A673 (cell line): ENCODE measurements at regions of chr2 and their contacts with region 1.

Region 1: GRCh38 chr2:170707821-170708795 is 7.0 kb upstream of the SP5 start:
- DNase-seq: no peak
- H3K4me3 ChIP-seq: no peak overlapping the region
- H3K27ac ChIP-seq: no peak overlapping the region
- H3K4me1 ChIP-seq: peaks cover 10% of the 10 kb centered on the region
- H3K27me3 ChIP-seq: peaks cover 55% of the 10 kb centered on the region
- CTCF ChIP-seq: no peak

Region 2: DNA sequence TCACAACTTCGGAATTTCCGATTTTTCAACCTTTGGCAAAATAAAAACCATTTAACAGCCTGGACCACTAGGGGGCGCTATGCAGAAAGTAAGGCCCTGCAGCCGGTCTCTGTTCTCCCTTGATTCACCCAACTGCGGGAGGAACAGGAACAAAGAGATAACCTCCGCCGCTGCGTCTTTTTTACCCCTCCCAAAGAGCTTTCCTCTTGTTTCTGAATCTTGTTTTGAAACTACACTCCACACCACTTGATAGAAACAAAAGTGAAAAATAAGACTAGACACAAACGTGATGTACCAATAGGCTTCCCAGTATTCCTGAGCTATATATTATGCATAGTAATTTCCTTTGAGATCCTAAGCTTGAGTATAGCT is 299.0 kb before region 1 on chr2:
- CTCF ChIA-PET with region 1: no interaction called
- POLR2A ChIA-PET with region 1: interaction called, 13 read pairs
- intact Hi-C with region 1: loop called (anchors 10 kb)
- DNase-seq: peak; percentile 82
- H3K4me3 ChIP-seq: no peak overlapping the region
- H3K27ac ChIP-seq: no peak overlapping the region
- H3K4me1 ChIP-seq: no peaks in the 10 kb centered on the region
- H3K27me3 ChIP-seq: peaks cover 55% of the 10 kb centered on the region
- CTCF ChIP-seq: peak; percentile 92

Region 3: GRCh38 chr2:170806548-170806947 is 98.4 kb after region 1 on chr2:
- CTCF ChIA-PET with region 1: no interaction called
- POLR2A ChIA-PET with region 1: no interaction called
- intact Hi-C with region 1: no loop called
- DNase-seq: no peak
- H3K4me3 ChIP-seq: no peak overlapping the region
- H3K27ac ChIP-seq: no peak overlapping the region
- H3K4me1 ChIP-seq: no peaks in the 10 kb centered on the region
- H3K27me3 ChIP-seq: peaks cover 19% of the 10 kb centered on the region
- CTCF ChIP-seq: no peak